PC-3 (cell line): ENCODE measurements at regions of chr1 and their contacts with region 1.

Region 1: GRCh38 chr1:6819246-6820040 is 34.2 kb downstream of the CAMTA1 start:
- DNase-seq: no peak
- ATAC-seq: no peak
- H3K4me3 ChIP-seq: no peak overlapping the region
- H3K27ac ChIP-seq: no peak overlapping the region
- H3K4me1 ChIP-seq: no peaks in the 10 kb centered on the region
- H3K27me3 ChIP-seq: no peaks in the 10 kb centered on the region
- CTCF ChIP-seq: no peak

Region 2: DNA sequence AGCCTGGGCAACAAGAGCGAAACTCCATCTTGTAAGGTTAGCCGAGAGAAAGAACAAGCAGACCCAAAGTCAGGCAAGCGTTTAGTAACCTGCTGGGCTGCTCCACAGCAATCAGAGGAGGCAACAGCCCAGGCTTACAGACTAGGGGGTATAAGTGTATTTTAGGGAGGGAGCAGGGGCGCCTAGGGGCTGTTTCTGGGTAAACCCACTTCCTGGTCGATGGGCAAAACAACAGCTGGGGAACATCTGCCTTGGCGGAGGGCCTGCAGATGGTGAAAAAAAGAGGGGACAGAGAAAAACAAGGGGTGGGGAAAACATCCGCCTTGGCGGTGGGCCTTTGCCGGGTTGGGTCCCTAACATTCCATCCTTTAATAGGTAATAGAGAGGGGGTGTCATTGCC is 259.2 kb before region 1 on chr1:
- CTCF ChIA-PET with region 1: no interaction called
- POLR2A ChIA-PET with region 1: no interaction called
- intact Hi-C with region 1: no loop called
- DNase-seq: no peak
- ATAC-seq: no peak
- H3K4me3 ChIP-seq: no peak overlapping the region
- H3K27ac ChIP-seq: no peak overlapping the region
- H3K4me1 ChIP-seq: no peaks in the 10 kb centered on the region
- H3K27me3 ChIP-seq: peaks cover 30% of the 10 kb centered on the region
- CTCF ChIP-seq: no peak

Region 3: GRCh38 chr1:6833804-6834203 is 14.4 kb after region 1 on chr1:
- CTCF ChIA-PET with region 1: no interaction called
- POLR2A ChIA-PET with region 1: interaction called, 13 read pairs
- intact Hi-C with region 1: no loop called
- DNase-seq: no peak
- ATAC-seq: no peak
- H3K4me3 ChIP-seq: no peak overlapping the region
- H3K27ac ChIP-seq: no peak overlapping the region
- H3K4me1 ChIP-seq: no peaks in the 10 kb centered on the region
- H3K27me3 ChIP-seq: no peaks in the 10 kb centered on the region
- CTCF ChIP-seq: no peak